ENCODE measurements at regions of chr11 and their contacts with region 1.

Region 1: DNA sequence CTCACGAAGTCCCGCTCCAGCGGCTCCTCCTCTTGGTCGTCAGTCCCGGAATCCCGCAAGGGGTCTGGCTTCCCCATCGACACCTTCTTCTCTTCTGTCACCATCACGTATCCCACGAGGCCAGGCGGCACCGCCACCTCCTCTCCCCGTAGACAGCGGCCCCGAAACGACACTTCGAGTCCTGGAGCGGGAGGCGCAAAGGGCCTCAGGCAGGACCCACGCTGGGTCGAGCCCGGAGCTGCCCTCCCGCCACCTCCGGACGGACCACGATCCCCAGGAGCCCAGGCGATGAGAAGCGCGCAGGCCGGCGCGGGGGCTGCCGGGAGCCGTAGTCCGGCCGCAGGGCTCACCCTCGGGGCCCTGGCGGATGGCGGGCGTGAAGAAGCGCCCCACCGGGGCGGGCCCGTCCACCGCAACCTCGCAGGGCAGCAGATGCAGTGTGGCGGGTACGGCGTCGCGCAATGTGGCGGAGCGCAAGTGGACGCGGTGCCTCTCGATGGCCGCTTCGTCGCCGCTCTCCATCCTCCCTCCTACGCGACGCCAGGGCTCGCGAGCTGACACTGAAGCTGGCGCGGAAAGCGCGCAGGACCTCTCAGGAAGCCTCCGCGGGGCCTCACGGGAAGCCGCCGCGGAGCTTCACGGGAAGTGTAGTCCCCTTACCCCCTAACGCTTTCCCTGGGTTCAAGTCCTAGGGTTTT is at the start of gene RNASEH2C:
- DNase-seq: peak; percentile 91
- ATAC-seq: peak; percentile 94
- H3K4me3 Mint-ChIP-seq: peak within 1 kb of the TSS; percentile 88
- H3K27ac Mint-ChIP-seq: peak within 1 kb of the TSS; percentile 96
- H3K4me1 Mint-ChIP-seq: peaks cover 22% of the 10 kb centered on the region
- H3K27me3 Mint-ChIP-seq: no peaks in the 10 kb centered on the region
- CTCF ChIP-seq: no peak
- total RNA-seq, gene RNASEH2C: 101 to 109 TPM

Region 2: DNA sequence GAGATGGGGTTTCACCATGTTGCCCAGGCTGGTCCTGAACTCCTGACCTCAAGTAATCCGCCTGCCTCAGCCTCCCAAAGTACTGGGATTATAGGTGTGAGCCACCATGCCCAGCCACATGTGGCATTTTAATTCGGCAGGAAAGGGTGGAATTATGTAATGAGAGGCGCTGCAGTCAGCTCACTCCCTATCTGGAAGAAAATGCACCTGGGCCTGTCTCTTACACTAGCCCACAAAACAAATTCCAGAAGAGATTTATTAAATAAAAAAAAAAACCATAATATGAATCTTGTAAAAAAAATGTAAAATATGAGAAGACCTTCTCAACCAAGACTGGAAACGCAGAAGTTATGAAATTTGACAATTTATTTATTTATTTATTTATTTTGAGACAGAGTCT is 16.5 kb before region 1 on chr11:
- CTCF ChIA-PET with region 1: interaction called, 11 read pairs
- POLR2A ChIA-PET with region 1: interaction called, 3 read pairs
- intact Hi-C with region 1: no loop called
- DNase-seq: no peak
- ATAC-seq: no peak
- H3K4me3 Mint-ChIP-seq: no peak overlapping the region
- H3K27ac Mint-ChIP-seq: no peak overlapping the region
- H3K4me1 Mint-ChIP-seq: peaks cover 7% of the 10 kb centered on the region
- H3K27me3 Mint-ChIP-seq: peaks cover 1% of the 10 kb centered on the region
- CTCF ChIP-seq: no peak

Measured in activated CD8-positive, alpha-beta T cell treated with anti-CD3 and anti-CD28 coated beads for 36 hours (primary cell).